Heart left ventricle (tissue), 16 donors: ENCODE measurements at regions of chr19 and their contacts with region 1.

Region 1: DNA sequence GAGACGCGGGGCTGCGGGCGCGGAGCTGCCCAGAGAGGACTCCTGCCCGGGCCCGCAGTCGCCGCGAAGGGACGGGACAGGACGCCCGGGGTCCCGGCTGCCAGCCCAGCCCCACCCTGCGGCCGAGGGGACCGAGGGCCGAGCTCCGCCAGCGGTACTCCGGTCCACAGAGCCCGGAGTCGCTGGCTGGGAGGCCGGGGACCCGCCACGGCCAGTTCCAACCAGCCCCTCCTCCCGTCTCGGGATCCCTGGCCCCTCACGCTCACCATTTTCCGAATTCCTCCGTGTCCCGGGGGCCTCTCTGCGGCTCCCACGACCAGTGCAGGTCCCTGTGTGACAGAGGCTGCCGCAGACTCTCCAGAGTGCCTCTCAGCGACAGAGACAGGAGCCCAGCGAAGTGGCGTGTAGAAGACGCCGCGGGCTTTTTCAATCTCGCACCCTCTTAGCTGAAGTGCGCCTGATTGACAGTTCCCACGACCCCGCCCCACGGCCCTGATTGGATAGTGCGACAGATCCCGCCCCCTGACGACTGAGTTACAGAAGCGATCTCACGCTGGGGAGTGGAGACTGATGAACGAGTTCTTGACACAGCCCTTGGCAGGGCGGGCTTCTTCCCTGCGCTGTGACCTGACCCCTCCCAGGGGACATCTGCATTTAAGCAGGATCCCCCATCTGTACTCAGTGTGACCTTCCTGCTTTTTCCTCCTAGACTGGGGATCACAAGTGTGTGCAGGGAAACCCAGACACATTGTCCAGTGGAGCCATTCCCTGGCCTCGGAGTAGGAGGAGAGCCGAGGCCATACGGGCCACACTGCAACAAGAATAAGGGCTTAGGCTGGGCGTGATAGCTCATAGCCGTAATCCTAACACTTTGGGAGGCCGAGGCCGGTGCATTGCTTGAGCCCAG is 44.0 kb downstream of the ZNF823 start:
- DNase-seq: peak; percentile 94 to 97 (median 96)
- ATAC-seq: peak; percentile 99 to 100 (median 100)
- H3K4me3 ChIP-seq: peak overlapping the region; percentile 63 to 97 (median 83)
- H3K27ac ChIP-seq: peak overlapping the region in 10 of 12 donors; percentile 14 to 65 (median 51)
- H3K4me1 ChIP-seq: peaks cover 0 to 16% (median 11%) of the 10 kb centered on the region in 12 donors
- H3K27me3 ChIP-seq: no peaks in the 10 kb centered on the region
- CTCF ChIP-seq: no peak
- POLR2A ChIP-seq: peak in 1 of 2 donors; percentile 81

Region 2: GRCh38 chr19:11738746-11739620 is 44.2 kb after region 1 on chr19 and contains the start of gene ZNF823:
- intact Hi-C with region 1: loop called in 4 of 10 experiments (anchors 2 to 5 kb)
- DNase-seq: peak; percentile 98 to 99 (median 99)
- ATAC-seq: peak; percentile 99 to 100 (median 100)
- H3K4me3 ChIP-seq: peak within 1 kb of the TSS; percentile 79 to 100 (median 92)
- H3K27ac ChIP-seq: peak within 1 kb of the TSS; percentile 77 to 96 (median 92)
- H3K4me1 ChIP-seq: peaks cover 0 to 27% (median 20%) of the 10 kb centered on the region in 12 donors
- H3K27me3 ChIP-seq: no peaks in the 10 kb centered on the region
- CTCF ChIP-seq: peak in 1 of 12 donors; percentile 9
- POLR2A ChIP-seq: peak in 1 of 2 donors; percentile 85
- total RNA-seq, gene ZNF823: 2.6 to 5.2 (median 4.0) TPM

Region 3: DNA sequence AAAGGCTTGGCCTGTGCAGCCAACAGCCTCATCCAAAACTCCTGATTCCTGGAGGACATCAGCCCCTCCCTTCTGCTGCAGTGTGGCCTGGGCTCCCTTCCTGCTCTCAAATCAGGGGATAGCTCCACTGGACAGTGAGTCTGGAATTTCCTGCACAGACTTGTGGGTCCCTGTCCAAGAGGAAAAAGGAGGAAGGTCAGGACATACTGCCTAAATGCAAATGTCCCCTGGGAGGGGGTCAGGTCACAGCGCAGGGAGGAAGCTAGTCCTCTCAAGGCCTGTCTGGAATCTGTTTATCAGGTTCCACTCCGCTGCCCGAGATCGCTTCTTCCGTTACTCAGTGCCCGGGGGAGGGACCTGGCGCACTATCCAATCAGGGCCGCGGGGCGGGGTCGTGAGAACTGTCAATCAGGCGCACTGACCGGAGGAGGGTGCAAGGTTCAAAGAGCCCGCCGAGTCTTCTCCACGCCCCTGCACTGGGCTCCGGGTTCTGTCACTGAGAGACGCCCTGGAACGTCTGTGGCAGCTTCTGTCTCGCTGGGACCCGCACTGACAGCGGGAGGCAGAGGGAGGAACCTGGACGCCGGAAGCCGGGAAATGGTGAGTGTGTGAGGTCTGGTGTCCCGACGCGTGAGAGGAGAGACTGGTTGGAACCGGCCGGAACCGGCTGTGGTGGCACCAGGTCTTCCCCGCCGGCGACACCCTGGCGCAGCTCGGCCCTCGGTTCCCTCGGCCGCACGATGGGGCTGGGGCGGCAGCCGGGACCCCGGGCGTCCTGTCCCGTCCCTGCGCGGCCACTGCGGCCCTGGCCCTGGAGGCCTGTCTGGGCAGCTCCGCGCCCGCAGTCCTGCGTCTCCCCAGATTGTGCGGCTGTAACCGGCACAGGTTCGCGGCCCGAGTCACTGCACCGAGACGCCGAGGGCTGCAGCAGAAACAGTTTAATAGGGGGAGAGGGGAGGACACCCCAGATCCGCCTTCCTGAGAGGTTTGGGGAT is 72.1 kb after region 1 on chr19 and contains the start of gene ZNF441:
- intact Hi-C with region 1: loop called in 4 of 10 experiments (anchors 2 to 10 kb)
- DNase-seq: peak; percentile 97 to 98 (median 98)
- ATAC-seq: peak; percentile 99 to 100 (median 100)
- H3K4me3 ChIP-seq: peak within 1 kb of the TSS; percentile 58 to 97 (median 86)
- H3K27ac ChIP-seq: peak within 1 kb of the TSS; percentile 67 to 97 (median 93)
- H3K4me1 ChIP-seq: peaks cover 0 to 22% (median 12%) of the 10 kb centered on the region in 12 donors
- H3K27me3 ChIP-seq: no peaks in the 10 kb centered on the region
- CTCF ChIP-seq: peak in 1 of 12 donors; percentile 6
- POLR2A ChIP-seq: peak in 1 of 2 donors; percentile 92
- total RNA-seq, gene ZNF441: 2.6 to 9.3 (median 4.9) TPM

Region 4: GRCh38 chr19:11781295-11782052 is 86.7 kb after region 1 on chr19:
- intact Hi-C with region 1: loop called in 1 of 10 experiments (anchors 10 kb)
- DNase-seq: no peak
- ATAC-seq: no peak
- H3K4me3 ChIP-seq: no peak overlapping the region
- H3K27ac ChIP-seq: no peak overlapping the region
- H3K4me1 ChIP-seq: no peaks in the 10 kb centered on the region
- H3K27me3 ChIP-seq: no peaks in the 10 kb centered on the region
- CTCF ChIP-seq: no peak
- POLR2A ChIP-seq: no peak